Dendritic cell treated with granulocyte-macrophage colony-stimulating factor and Interleukin-4, amounts not matched to agents 40 ng/mL and 50 ng/mL, for 4 days (primary cell): ENCODE measurements at regions of chr17 and their contacts with region 1.

Region 1: GRCh38 chr17:48791128-48792032 is 25.6 kb downstream of the TTLL6 start:
- H3K4me3 Mint-ChIP-seq: no peak overlapping the region
- H3K27ac Mint-ChIP-seq: no peak overlapping the region
- H3K4me1 Mint-ChIP-seq: peaks cover 6% of the 10 kb centered on the region
- H3K27me3 Mint-ChIP-seq: peaks cover 68% of the 10 kb centered on the region

Region 2: DNA sequence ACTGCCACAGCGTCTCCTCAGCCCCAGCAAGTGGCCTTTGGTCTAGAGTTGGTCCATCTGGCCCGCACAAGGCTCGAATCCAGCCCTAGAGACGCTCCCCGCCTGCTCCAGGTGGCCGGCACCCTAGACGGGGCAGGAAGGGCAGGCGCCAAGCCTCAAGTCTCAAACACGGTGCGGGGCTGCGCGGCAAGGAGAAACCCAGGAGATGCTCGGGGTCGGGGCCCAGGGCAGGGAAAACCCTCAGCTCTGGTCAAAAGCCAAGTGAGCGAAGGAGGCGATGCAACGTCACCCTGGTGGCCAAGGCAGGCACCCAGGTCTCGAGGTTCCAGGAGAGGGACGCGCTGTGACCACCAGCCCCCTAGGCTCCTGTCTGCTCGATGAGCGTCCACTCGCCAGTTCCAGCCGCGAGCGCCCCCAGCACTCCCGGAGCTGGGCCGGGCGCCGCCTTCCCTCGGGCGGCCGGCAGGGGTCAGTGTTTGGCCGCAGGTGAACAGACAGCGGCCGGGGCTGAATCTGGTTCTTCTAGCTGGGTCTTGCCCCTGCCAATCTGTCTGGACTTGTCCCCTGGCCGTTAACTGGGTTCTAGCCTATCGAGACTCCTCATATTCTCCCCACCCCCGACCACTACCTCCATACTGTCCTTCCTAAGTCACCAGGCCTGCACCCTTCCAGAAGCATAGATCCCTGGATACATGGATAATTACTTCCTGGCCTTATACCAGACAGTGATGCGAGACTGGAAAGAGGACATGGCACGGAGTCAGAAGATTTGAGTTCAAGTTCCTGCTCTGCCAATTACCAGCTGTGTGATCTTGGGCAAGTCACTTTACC is 113.0 kb before region 1 on chr17:
- intact Hi-C with region 1: loop called (anchors 2 kb)
- H3K4me3 Mint-ChIP-seq: no peak overlapping the region
- H3K27ac Mint-ChIP-seq: no peak overlapping the region
- H3K4me1 Mint-ChIP-seq: peaks cover 7% of the 10 kb centered on the region
- H3K27me3 Mint-ChIP-seq: peaks cover 66% of the 10 kb centered on the region

Region 3: GRCh38 chr17:48724251-48725003 is 67.0 kb before region 1 on chr17:
- intact Hi-C with region 1: loop called (anchors 1 kb)
- H3K4me3 Mint-ChIP-seq: no peak overlapping the region
- H3K27ac Mint-ChIP-seq: no peak overlapping the region
- H3K4me1 Mint-ChIP-seq: peaks cover 51% of the 10 kb centered on the region
- H3K27me3 Mint-ChIP-seq: peaks cover 94% of the 10 kb centered on the region

Region 4: GRCh38 chr17:48738803-48739526 is 52.4 kb before region 1 on chr17:
- intact Hi-C with region 1: no loop called
- H3K4me3 Mint-ChIP-seq: no peak overlapping the region
- H3K27ac Mint-ChIP-seq: no peak overlapping the region
- H3K4me1 Mint-ChIP-seq: peaks cover 10% of the 10 kb centered on the region
- H3K27me3 Mint-ChIP-seq: peaks cover 97% of the 10 kb centered on the region